Posterior vena cava (tissue), 2 donors: ENCODE measurements at regions of chr4 and their contacts with region 1.

Region 1: DNA sequence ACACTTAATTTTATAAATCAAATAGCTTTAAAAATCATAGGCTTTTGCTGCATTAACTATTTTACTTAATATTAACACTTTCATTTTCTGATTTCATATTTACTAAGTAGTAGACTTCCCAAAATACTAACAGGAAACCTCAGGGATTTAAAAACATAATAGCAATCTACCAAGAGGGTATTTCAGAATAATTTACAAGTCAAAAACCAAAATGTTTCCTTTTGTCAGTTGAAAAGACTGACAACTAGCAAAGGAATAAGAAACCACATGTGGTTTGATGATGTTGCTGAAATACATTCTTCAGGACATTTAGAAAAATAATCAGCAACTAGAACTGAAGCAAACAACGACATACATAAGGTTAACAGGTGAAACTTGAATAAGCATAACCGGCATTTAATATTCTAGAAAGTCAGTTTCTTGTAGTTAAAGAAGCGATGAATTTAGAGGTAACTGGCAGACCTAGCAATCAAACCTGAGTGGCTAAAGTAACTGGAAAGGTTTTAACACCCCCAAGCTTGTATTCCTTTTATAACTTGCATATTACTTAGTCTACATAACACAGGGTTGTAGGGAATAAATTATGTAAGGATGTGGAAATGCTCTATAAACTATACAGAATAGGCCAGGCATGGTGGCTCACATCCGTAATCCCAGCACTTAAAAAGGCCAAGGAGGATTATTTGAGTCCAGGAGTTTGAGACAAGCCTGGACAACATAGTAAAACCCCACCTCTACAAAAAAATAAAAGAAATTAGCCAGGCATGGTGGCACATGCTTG is 40.0 kb downstream of the DHX15 start:
- DNase-seq: no peak

Region 2: GRCh38 chr4:23297327-23297726 is 1247.1 kb before region 1 on chr4:
- intact Hi-C with region 1: loop called in 1 of 2 experiments (anchors 5 kb)
- DNase-seq: no peak

Region 3: DNA sequence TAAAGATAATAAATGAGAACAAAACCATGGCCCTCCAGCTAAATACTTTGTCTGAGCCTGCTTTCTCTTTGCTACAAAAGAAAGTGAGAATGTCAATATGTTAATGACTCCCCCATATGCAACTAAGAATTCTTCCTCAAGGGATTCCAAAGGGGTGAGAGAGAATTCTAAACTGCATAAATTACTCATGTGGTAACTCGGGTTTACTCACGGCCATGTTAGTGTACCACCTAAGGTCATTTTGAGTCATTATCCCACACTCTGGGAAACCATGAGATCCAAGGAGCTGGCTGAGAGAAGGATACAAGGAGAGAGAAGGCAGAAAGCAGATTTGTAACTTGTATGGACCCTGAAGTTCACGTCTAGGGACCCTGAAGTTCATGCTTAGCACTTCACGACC is 150.4 kb before region 1 on chr4:
- intact Hi-C with region 1: no loop called
- DNase-seq: no peak

Region 4: GRCh38 chr4:24657768-24658617 is 113.6 kb after region 1 on chr4:
- intact Hi-C with region 1: no loop called
- DNase-seq: no peak